HepG2 (cell line): ENCODE measurements at regions of chr20 and their contacts with region 1.

Region 1: GRCh38 chr20:39503902-39504709 is 542.0 kb downstream of the DHX35 start:
- DNase-seq: no peak
- ATAC-seq: no peak
- H3K4me3 ChIP-seq: no peak overlapping the region
- H3K27ac ChIP-seq: no peak overlapping the region
- H3K4me1 ChIP-seq: no peaks in the 10 kb centered on the region
- H3K27me3 ChIP-seq: no peaks in the 10 kb centered on the region
- CTCF ChIP-seq: no peak
- EP300 ChIP-seq: no peak
- POLR2A ChIP-seq: no peak
- RAD21 ChIP-seq: no peak

Region 2: GRCh38 chr20:39190666-39191570 is 313.2 kb before region 1 on chr20:
- CTCF ChIA-PET with region 1: no interaction called
- POLR2A ChIA-PET with region 1: no interaction called
- in situ Hi-C with region 1: no loop called
- intact Hi-C with region 1: no loop called
- DNase-seq: peak; percentile 58
- ATAC-seq: peak; percentile 86
- H3K4me3 ChIP-seq: no peak overlapping the region
- H3K27ac ChIP-seq: no peak overlapping the region
- H3K4me1 ChIP-seq: 0 out of 2 replicates have a peak, but pooled peaks cover 4% of the 10 kb centered on the region
- H3K27me3 ChIP-seq: peaks cover 0 to 3% of the 10 kb centered on the region in 2 experiments; a peak in 1 of 5 replicates
- CTCF ChIP-seq: no peak
- EP300 ChIP-seq: no peak
- POLR2A ChIP-seq: no peak
- RAD21 ChIP-seq: no peak

Region 3: DNA sequence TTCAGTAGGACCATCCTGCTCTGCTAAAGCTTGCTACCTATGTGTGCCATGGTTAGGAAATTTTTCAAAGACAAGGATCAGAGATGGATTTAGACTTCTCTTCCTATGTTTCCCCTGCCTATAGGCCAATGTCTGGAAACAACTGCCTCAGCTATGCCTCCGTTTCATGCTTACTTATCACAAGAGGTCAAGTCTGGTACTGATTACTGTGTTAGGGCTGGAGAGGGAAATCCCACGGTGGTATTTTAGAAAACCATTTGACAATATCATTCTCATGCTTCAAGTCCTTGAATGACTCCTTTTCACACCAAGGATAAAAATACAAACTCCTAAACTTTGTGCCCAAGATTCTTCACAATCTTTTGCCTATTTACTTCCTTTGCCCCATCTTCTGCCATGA is 57.7 kb before region 1 on chr20:
- CTCF ChIA-PET with region 1: no interaction called
- POLR2A ChIA-PET with region 1: no interaction called
- in situ Hi-C with region 1: loop called (anchors 10 kb)
- intact Hi-C with region 1: no loop called
- DNase-seq: no peak
- ATAC-seq: no peak
- H3K4me3 ChIP-seq: no peak overlapping the region
- H3K27ac ChIP-seq: no peak overlapping the region
- H3K4me1 ChIP-seq: no peaks in the 10 kb centered on the region
- H3K27me3 ChIP-seq: no peaks in the 10 kb centered on the region
- CTCF ChIP-seq: no peak
- EP300 ChIP-seq: no peak
- POLR2A ChIP-seq: no peak
- RAD21 ChIP-seq: no peak

Region 4: GRCh38 chr20:39458452-39458851 is 45.7 kb before region 1 on chr20:
- CTCF ChIA-PET with region 1: no interaction called
- POLR2A ChIA-PET with region 1: no interaction called
- in situ Hi-C with region 1: no loop called
- intact Hi-C with region 1: no loop called
- DNase-seq: no peak
- ATAC-seq: no peak
- H3K4me3 ChIP-seq: no peak overlapping the region
- H3K27ac ChIP-seq: no peak overlapping the region
- H3K4me1 ChIP-seq: no peaks in the 10 kb centered on the region
- H3K27me3 ChIP-seq: no peaks in the 10 kb centered on the region
- CTCF ChIP-seq: no peak
- EP300 ChIP-seq: no peak
- POLR2A ChIP-seq: no peak
- RAD21 ChIP-seq: no peak

Region 5: DNA sequence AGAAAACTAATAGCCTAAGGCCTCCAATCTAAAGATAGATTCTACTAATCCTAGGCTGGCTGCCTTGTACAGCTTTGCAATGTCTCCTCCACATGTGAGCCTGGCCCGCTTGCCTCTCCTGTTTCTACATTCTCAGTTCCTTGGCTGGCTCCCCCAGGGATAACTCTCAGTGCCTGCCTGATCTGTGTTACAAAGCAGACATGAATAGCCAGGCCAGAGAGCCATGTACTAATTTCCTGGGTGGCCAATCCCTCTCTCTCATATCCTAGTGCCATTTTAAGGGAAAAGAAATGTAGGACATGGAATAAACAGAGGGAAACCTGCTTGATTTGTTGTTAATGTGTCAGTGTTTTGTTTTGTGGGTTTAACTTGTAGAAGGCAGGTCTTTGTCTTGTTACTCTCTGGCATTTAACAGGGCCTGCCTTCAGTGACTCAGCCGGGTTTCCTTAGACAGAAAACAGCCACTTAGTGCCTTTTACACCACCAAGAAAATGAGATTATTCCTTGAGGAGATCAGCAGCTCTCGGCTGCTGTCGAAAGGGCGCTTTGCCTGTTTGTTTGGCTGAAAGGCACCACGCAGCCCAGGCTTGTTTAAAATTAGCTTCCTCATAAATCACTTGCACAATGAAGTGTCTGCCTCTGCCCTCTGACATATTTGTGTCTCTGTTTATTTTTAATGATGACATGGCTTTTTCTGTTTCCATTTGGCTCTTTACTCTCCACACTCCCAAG is 482.2 kb after region 1 on chr20:
- CTCF ChIA-PET with region 1: no interaction called
- POLR2A ChIA-PET with region 1: no interaction called
- in situ Hi-C with region 1: no loop called
- intact Hi-C with region 1: no loop called
- DNase-seq: no peak
- ATAC-seq: no peak
- H3K4me3 ChIP-seq: no peak overlapping the region
- H3K27ac ChIP-seq: no peak overlapping the region
- H3K4me1 ChIP-seq: no peaks in the 10 kb centered on the region
- H3K27me3 ChIP-seq: no peaks in the 10 kb centered on the region
- CTCF ChIP-seq: no peak
- EP300 ChIP-seq: no peak
- POLR2A ChIP-seq: no peak
- RAD21 ChIP-seq: no peak